ENCODE measurements at regions of chr21 and their contacts with region 1.

Region 1: GRCh38 chr21:41283211-41283818 is 33.3 kb upstream of the FAM3B start:
- DNase-seq: peak; percentile 28
- ATAC-seq: peak; percentile 90
- H3K4me3 Mint-ChIP-seq: no peak overlapping the region
- H3K27ac Mint-ChIP-seq: no peak overlapping the region
- H3K4me1 Mint-ChIP-seq: peaks cover 11% of the 10 kb centered on the region
- H3K27me3 Mint-ChIP-seq: no peaks in the 10 kb centered on the region
- CTCF ChIP-seq: peak; percentile 53

Region 2: DNA sequence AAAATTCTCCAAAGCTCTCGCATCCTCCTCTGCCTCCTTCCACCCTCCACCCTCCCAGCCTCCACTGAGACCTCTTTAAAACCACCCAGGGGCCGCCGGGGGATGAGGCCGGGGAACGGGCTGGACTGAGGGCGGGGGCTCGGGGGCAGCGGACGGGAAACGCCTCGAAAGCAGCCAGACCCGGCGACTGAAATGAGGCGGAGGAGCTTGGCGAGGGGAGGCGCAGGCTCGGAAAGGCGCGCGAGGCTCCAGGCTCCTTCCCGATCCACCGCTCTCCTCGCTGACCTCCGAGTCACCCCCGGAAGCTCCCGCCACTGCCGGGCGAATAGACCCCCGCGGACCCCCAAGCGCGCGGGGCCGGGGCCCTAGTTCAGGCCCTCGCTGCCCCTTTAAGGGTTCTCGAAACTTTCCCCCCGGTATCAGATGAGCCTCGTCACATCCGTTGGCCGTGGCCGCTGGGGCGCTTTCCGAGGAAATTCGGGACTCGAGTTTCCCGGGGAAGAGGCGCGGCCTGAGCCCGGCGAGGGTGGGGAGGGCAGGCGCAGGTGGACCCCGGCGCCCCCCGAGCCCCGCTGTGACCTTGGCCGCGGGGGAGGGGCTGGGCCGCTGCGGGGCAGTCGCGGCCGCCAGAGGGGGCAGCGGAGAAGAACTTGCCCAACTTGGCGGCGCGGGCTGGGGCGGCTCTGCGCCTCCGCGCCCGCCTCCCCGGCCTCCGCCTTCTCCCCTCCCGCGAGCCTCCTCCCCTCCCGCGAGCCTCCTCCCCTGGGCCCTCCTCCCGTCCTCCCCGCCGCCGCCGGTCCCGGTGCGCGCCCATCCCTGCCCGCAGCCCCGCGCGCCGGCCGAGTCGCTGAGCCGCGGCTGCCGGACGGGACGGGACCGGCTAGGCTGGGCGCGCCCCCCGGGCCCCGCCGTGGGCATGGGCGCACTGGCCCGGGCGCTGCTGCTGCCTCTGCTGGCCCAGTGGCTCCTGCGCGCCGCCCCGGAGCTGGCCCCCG is 115.7 kb before region 1 on chr21 and contains the start of gene BACE2:
- CTCF ChIA-PET with region 1: interaction called, 48 read pairs
- POLR2A ChIA-PET with region 1: no interaction called
- DNase-seq: peak; percentile 69
- ATAC-seq: peak; percentile 75
- H3K4me3 Mint-ChIP-seq: peak within 1 kb of the TSS; percentile 77
- H3K27ac Mint-ChIP-seq: no peak within 1 kb of the TSS
- H3K4me1 Mint-ChIP-seq: peaks cover 21% of the 10 kb centered on the region
- H3K27me3 Mint-ChIP-seq: peaks cover 50% of the 10 kb centered on the region
- CTCF ChIP-seq: no peak
- total RNA-seq, gene BACE2: 9.8 to 11.8 TPM (median 11.1 TPM) in 3 replicates

Region 3: DNA sequence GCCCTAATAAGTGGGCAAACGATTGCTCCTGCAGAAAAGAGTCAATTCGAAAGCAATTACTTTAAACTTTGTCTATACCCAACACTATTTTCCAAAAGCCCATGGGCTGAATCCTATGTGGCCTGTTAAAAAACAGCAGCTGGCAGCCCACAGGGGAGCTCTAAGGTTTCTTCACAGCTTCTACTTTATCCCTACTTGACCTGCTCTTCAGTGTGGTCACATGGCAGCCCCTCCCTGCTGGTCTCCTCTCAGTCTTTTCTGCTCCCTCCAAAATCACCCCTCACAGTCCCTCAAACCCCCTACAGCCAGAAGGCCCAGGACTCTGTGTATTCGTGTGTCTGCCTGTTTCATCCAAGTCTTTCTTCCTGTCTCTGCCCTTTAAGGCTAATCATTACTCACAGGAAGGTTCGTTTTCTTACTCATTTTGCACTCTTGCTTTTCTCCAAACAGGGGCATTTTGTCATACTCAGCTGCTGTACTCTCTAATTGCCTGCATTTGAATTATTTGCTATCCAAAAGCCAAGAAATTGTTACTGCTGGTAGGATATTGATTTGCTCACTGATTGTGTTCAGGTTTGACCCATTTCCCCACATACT is 29.1 kb before region 1 on chr21:
- CTCF ChIA-PET with region 1: no interaction called
- POLR2A ChIA-PET with region 1: no interaction called
- DNase-seq: no peak
- ATAC-seq: no peak
- H3K4me3 Mint-ChIP-seq: no peak overlapping the region
- H3K27ac Mint-ChIP-seq: no peak overlapping the region
- H3K4me1 Mint-ChIP-seq: no peaks in the 10 kb centered on the region
- H3K27me3 Mint-ChIP-seq: peaks cover 2% of the 10 kb centered on the region; the same call in 1 of the 2 replicates
- CTCF ChIP-seq: no peak

Region 4: GRCh38 chr21:41361786-41362604 is 78.7 kb after region 1 on chr21 and contains the start of gene MX2:
- CTCF ChIA-PET with region 1: interaction called, 76 read pairs
- POLR2A ChIA-PET with region 1: no interaction called
- DNase-seq: no peak
- ATAC-seq: no peak
- H3K4me3 Mint-ChIP-seq: no peak within 1 kb of the TSS
- H3K27ac Mint-ChIP-seq: no peak within 1 kb of the TSS; the same call in 1 of the 2 replicates
- H3K4me1 Mint-ChIP-seq: peaks cover 18% of the 10 kb centered on the region
- H3K27me3 Mint-ChIP-seq: no peaks in the 10 kb centered on the region
- CTCF ChIP-seq: no peak
- total RNA-seq, gene MX2: 2.6 to 4.0 TPM (median 2.7 TPM) in 3 replicates

Region 5: GRCh38 chr21:41378879-41379278 is 95.6 kb after region 1 on chr21:
- CTCF ChIA-PET with region 1: interaction called, 28 read pairs
- POLR2A ChIA-PET with region 1: no interaction called
- DNase-seq: no peak
- ATAC-seq: peak; percentile 53
- H3K4me3 Mint-ChIP-seq: no peak overlapping the region
- H3K27ac Mint-ChIP-seq: no peak overlapping the region
- H3K4me1 Mint-ChIP-seq: peaks cover 7% of the 10 kb centered on the region
- H3K27me3 Mint-ChIP-seq: 0 out of 2 replicates have a peak, but pooled peaks cover 2% of the 10 kb centered on the region
- CTCF ChIP-seq: no peak

Region 6: GRCh38 chr21:41460578-41461527 is 177.5 kb after region 1 on chr21:
- CTCF ChIA-PET with region 1: interaction called, 59 read pairs
- POLR2A ChIA-PET with region 1: no interaction called
- DNase-seq: peak; percentile 70
- ATAC-seq: peak; percentile 93
- H3K4me3 Mint-ChIP-seq: no peak overlapping the region
- H3K27ac Mint-ChIP-seq: no peak overlapping the region
- H3K4me1 Mint-ChIP-seq: peaks cover 17% of the 10 kb centered on the region
- H3K27me3 Mint-ChIP-seq: no peaks in the 10 kb centered on the region; the same call in 1 of the 2 replicates
- CTCF ChIP-seq: no peak

Region 7: GRCh38 chr21:41816220-41817165 is 533.2 kb after region 1 on chr21:
- CTCF ChIA-PET with region 1: interaction called, 15 read pairs
- POLR2A ChIA-PET with region 1: no interaction called
- DNase-seq: peak; percentile 75
- ATAC-seq: peak; percentile 73
- H3K4me3 Mint-ChIP-seq: no peak overlapping the region
- H3K27ac Mint-ChIP-seq: no peak overlapping the region
- H3K4me1 Mint-ChIP-seq: no peaks in the 10 kb centered on the region
- H3K27me3 Mint-ChIP-seq: no peaks in the 10 kb centered on the region
- CTCF ChIP-seq: peak; percentile 73

Measured in WTC11 (cell line).